IMR-90 (cell line): ENCODE measurements at regions of chr11 and their contacts with region 1.

Region 1: GRCh38 chr11:44133335-44133946 is 38.0 kb downstream of the EXT2 start:
- DNase-seq: peak; percentile 59
- ATAC-seq: peak; percentile 75
- H3K4me3 ChIP-seq: no peak overlapping the region
- H3K27ac ChIP-seq: no peak overlapping the region
- H3K4me1 ChIP-seq: peaks cover 4% of the 10 kb centered on the region; the same call in 1 of the 2 replicates
- H3K27me3 ChIP-seq: no peaks in the 10 kb centered on the region
- CTCF ChIP-seq: peak; percentile 72
- POLR2A ChIP-seq: no peak
- RAD21 ChIP-seq: peak; percentile 73

Region 2: DNA sequence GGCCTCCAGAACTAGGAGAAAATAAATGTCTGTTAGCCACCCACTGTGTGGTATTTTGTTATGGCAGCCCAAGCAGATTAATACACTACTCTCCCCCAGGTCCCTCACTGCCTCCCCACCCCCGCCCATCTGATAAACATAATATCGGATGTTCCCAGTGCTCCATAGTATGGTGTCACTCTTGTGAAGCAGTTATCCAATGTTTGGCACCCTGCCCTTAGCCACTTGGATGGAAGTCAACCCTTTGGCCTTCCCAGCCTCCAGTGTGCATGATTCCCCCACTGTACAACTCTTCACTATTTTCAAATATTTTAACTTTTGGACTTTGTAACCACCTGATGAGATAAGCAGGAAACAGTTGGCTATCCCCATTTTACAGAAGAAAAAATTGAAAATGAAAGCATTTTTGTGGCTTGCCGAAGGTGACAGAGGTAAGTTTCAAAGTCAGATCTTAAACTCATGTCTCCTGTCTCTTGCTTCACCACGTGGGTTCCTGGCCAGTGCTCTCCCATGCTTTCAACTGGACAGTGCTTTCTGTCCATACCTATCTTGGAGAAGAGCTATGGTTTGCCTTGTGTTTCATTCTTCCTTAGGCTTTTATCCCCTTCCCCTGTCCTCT is 123.3 kb after region 1 on chr11:
- CTCF ChIA-PET with region 1: no interaction called
- POLR2A ChIA-PET with region 1: no interaction called
- dilution Hi-C with region 1: no loop called
- in situ Hi-C with region 1: no loop called
- intact Hi-C with region 1: loop called (anchors 10 kb)
- DNase-seq: no peak
- ATAC-seq: no peak
- H3K4me3 ChIP-seq: no peak overlapping the region
- H3K27ac ChIP-seq: no peak overlapping the region
- H3K4me1 ChIP-seq: no peaks in the 10 kb centered on the region; the same call in 1 of the 2 replicates
- H3K27me3 ChIP-seq: no peaks in the 10 kb centered on the region
- CTCF ChIP-seq: no peak
- POLR2A ChIP-seq: no peak
- RAD21 ChIP-seq: no peak

Region 3: GRCh38 chr11:44326615-44327475 is 193.4 kb after region 1 on chr11:
- CTCF ChIA-PET with region 1: interaction called, 3 read pairs
- POLR2A ChIA-PET with region 1: no interaction called
- dilution Hi-C with region 1: no loop called
- in situ Hi-C with region 1: no loop called
- intact Hi-C with region 1: loop called (anchors 2 kb)
- DNase-seq: no peak
- ATAC-seq: 0 out of 2 replicates have a peak, but pooled peaks have one; percentile 27
- H3K4me3 ChIP-seq: no peak overlapping the region
- H3K27ac ChIP-seq: no peak overlapping the region
- H3K4me1 ChIP-seq: no peaks in the 10 kb centered on the region
- H3K27me3 ChIP-seq: peaks cover 91% of the 10 kb centered on the region
- CTCF ChIP-seq: 0 out of 2 replicates have a peak, but pooled peaks have one; percentile 16
- POLR2A ChIP-seq: no peak
- RAD21 ChIP-seq: no peak

Region 4: DNA sequence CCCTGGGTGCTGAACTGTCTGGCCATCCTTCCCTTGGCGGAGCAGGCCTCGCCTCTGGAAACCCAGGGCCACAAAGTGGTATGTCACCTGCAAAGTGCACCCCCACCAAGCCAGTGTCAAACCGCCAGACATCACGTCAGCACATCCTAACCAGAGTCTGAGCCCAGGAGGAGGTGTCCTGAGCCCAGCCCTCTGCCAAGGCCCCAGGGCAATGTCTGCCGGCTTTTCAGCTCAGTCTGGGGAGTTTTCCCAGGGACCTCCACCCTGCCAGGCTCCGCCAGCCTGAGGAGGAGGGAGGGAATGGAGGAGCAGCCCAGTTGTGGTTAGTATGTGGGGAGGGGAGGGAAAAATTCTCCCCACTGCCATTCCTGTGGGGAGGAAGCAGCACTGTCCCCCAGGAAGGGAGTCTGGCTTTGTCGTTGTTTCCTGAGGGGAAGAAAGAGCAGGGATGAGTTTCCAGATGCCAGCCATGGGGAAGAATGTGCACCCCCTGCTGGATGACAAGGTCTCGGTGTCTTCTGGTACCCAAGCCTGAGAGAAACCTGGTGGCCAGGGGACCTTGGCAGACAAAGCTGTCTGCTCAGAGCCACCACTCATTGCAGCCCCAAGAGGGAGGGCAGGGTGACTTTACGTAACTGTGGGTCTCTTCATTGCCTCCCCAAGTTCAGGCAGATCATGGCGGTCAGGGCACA is 350.6 kb after region 1 on chr11:
- CTCF ChIA-PET with region 1: no interaction called
- POLR2A ChIA-PET with region 1: no interaction called
- dilution Hi-C with region 1: no loop called
- in situ Hi-C with region 1: no loop called
- intact Hi-C with region 1: loop called (anchors 1 kb)
- DNase-seq: peak; percentile 5
- ATAC-seq: peak; percentile 40; the same call in 1 of the 2 replicates
- H3K4me3 ChIP-seq: no peak overlapping the region
- H3K27ac ChIP-seq: no peak overlapping the region
- H3K4me1 ChIP-seq: no peaks in the 10 kb centered on the region
- H3K27me3 ChIP-seq: peaks cover 4% of the 10 kb centered on the region
- CTCF ChIP-seq: peak; percentile 39; the same call in 1 of the 2 replicates
- POLR2A ChIP-seq: no peak
- RAD21 ChIP-seq: peak; percentile 47

Region 5: GRCh38 chr11:44538375-44539054 is 405.1 kb after region 1 on chr11:
- CTCF ChIA-PET with region 1: no interaction called
- POLR2A ChIA-PET with region 1: no interaction called
- dilution Hi-C with region 1: no loop called
- in situ Hi-C with region 1: loop called (anchors 5 kb)
- intact Hi-C with region 1: loop called (anchors 1 kb)
- DNase-seq: peak; percentile 56
- ATAC-seq: peak; percentile 100
- H3K4me3 ChIP-seq: no peak overlapping the region
- H3K27ac ChIP-seq: no peak overlapping the region
- H3K4me1 ChIP-seq: no peaks in the 10 kb centered on the region
- H3K27me3 ChIP-seq: peaks cover 32% of the 10 kb centered on the region
- CTCF ChIP-seq: peak; percentile 98
- POLR2A ChIP-seq: peak; percentile 42; the same call in 1 of the 2 replicates
- RAD21 ChIP-seq: peak; percentile 98